A673 (cell line): ENCODE measurements at regions of chr1 and their contacts with region 1.

Region 1: DNA sequence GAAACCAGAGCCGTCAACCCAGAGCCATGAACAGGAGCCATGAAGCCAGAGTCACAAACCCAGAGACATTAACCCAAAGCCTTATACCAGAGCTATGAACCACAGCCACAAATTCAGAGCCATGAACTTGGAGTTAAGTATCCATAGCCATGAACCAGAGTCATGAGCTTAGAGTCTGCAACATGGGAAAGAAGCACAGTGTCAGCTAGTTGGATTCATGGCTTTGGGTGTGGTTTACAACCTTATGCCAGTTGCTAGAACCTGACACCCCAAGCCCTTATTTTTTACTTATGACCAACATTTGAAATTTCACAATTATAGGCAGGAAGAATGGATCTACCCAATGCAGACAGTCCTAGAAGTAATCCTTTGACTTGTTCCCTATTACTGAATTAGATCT is 128.9 kb upstream of the FAM78B start:
- DNase-seq: no peak
- H3K4me3 ChIP-seq: no peak overlapping the region
- H3K27ac ChIP-seq: no peak overlapping the region
- H3K4me1 ChIP-seq: no peaks in the 10 kb centered on the region
- H3K27me3 ChIP-seq: peaks cover 9% of the 10 kb centered on the region
- CTCF ChIP-seq: no peak

Region 2: DNA sequence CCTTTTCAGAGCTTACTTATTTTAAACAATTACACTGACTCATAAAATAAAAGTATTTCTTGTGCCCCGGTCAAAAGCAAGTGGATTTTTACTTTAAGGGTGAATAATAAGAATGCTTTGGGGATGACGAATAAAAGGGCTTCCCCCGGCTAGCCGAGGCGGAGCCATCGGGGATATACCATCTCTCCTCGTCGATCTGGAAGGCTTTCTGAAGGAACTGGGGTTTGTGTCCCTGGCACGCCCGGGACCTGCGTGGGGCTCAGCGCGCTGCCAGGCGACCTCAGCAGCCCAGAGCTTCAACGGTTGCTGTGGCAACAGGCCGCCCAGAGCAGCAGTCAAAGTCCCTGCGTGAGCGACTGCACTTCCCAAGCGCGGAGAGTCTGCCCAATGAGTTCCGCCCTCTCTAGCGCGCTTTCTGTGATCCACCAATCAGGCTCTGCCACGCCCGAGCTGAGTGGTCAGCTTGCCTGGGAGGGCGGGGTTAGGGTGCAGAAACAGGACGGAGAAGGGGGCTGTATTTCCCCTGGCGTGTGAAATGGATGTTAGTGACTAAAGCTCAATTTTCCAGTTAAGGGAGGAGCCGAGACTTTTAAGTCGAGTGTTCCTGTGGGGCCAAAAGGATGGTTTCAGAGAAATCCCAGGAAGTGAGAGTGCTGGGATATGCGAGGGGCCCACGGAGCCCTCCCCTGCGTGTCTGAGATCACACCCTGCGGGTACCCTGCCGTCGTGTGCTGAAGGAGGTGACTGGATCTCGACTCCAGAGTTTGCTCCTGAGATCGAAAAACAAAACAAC is 697.6 kb before region 1 on chr1:
- CTCF ChIA-PET with region 1: no interaction called
- POLR2A ChIA-PET with region 1: no interaction called
- intact Hi-C with region 1: no loop called
- DNase-seq: peak; percentile 98
- H3K4me3 ChIP-seq: peak overlapping the region; percentile 50
- H3K27ac ChIP-seq: peak overlapping the region; percentile 58
- H3K4me1 ChIP-seq: no peaks in the 10 kb centered on the region
- H3K27me3 ChIP-seq: peaks cover 15% of the 10 kb centered on the region
- CTCF ChIP-seq: no peak

Region 3: GRCh38 chr1:166258017-166258416 is 37.6 kb before region 1 on chr1:
- CTCF ChIA-PET with region 1: no interaction called
- POLR2A ChIA-PET with region 1: interaction called, 10 read pairs
- intact Hi-C with region 1: no loop called
- DNase-seq: no peak
- H3K4me3 ChIP-seq: no peak overlapping the region
- H3K27ac ChIP-seq: no peak overlapping the region
- H3K4me1 ChIP-seq: no peaks in the 10 kb centered on the region
- H3K27me3 ChIP-seq: no peaks in the 10 kb centered on the region
- CTCF ChIP-seq: no peak